Right ventricle myocardium inferior (tissue), 1 donor: ENCODE measurements at regions of chr12 and their contacts with region 1.

Region 1: DNA sequence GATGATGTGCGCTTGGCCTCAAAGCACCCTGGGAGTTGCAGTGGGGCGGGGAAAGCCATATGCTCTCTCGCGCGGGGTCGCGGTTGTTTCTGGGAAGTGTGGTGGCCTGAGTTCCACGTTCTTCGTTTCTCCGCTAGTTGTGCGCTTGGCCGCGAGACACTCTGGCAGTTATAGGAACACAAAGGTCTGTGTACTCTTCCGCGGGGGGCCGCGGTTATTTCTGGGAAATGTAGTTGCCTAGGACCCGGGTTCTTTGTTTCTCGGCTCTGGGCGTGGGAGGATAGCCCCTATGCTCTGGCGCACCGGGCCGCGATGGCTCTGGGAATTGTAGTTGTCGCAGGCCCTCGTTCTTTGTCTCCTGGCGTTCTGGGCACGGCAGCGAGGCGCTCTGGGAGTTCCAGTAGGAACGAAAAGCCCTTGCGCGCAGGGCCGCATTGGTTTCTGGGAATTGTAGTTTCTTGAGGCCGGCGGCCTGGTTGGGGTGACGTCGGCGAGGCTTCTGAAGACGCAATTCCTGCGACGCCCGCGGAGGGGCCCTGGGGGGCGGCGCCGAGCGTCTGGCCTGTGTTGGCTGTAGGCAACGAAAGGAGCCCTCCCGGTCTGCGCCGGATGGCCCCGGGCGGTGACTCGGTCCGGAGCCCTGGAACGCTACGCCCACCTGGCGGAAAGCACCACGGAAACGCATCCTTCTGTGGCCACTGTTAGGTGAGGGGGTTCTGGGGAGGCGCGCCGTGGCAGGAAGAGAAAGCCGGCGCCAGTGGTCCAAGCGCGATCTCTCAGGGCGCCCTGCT is at the start of gene ZNF140:
- DNase-seq: peak; percentile 98
- ATAC-seq: peak; percentile 87
- total RNA-seq, gene ZNF140: 6.3 TPM

Region 2: GRCh38 chr12:132986001-132986912 is 94.3 kb before region 1 on chr12 and contains the start of gene ZNF26:
- intact Hi-C with region 1: loop called (anchors 1 kb)
- DNase-seq: peak; percentile 96
- ATAC-seq: peak; percentile 99
- total RNA-seq, gene ZNF26: 4.4 TPM

Region 3: DNA sequence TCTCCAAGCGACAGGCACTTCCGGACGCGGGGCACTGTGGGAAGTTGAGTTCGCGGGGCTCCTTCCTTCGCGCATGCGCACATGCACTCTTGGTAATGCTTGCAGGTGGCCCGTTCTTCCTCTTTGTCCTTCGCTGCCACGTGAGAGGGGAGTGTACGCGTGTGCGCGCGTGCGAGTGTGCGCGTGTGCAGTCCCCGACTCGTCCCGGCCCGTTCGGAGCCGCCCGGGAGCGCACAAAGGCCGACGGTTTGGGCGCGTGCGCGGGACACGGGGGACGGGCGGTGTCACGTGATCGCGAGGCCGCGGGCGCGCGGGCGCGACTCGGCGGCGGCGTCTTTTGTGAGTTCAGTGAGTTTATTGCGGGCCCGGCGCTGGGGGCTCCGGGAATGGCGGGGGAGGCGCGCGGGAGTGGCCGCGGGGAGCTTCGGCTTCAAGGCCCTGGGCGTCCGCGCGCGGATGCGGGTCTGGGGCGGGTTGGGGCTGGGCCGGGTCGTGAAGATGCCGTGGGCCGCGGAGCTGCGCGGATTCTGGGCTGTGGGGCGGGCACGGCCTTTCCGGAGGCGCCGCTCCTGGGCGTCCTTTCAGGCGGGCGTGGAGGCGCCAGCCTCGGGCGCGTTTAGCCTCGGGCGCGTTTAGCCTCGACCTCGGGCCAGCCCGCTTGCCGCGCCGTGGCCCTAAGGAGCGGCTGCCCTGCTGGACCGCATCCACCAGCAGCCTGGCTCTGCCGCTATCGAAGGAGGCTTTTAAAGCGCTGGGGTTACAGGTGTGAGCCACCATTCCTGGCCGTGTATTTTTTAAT is 43.2 kb before region 1 on chr12 and contains the start of gene ZNF84:
- intact Hi-C with region 1: loop called (anchors 1 kb)
- DNase-seq: peak; percentile 97
- ATAC-seq: peak; percentile 99
- total RNA-seq, gene ZNF84: 15.1 TPM

Region 4: GRCh38 chr12:133130038-133130807 is 49.7 kb after region 1 on chr12 and contains the starts of genes ZNF10 and ZNF891:
- intact Hi-C with region 1: loop called (anchors 1 kb)
- DNase-seq: peak; percentile 99
- ATAC-seq: peak; percentile 98
- total RNA-seq, gene ZNF10: 5.4 TPM
- total RNA-seq, gene ZNF891: 1.2 TPM

Region 5: DNA sequence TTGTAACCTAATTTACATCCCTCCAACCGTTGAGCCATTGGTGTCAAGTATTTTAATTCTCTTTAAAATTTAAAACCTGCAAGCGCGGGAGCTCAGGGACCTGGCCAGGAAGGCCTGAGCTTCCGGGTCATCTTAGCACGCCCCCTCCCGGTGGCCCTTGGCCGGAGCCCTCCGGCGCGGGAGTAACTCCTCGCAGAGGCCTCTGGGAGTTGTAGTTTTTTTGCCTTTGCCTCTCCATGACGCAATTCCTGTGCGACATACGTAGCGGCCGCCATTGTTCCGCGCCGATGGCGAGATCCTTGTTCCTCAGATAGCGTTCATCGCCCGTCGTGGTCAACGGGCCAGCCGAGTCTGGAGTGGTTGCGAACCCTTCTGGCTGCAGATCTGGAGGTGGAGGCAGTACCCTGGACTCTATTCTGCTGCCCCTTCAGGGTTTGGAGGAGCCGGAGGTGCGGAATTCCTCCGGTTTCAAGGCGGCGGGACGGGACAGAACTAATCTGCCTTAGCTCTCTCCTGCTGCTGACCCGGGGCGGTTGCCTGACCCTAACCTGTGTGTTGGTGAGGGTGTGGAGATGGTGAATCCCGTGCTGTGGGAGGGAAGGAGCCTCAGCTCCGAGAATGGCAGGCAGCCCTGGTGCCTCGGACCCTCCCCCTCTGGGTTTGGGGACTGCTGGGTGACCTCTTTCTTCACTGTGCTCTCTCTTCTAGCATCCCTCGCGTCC is 100.8 kb after region 1 on chr12 and contains the start of gene ZNF268:
- intact Hi-C with region 1: loop called (anchors 1 kb)
- DNase-seq: peak; percentile 94
- ATAC-seq: peak; percentile 98
- total RNA-seq, gene ZNF268: 6.8 TPM